HepG2 (cell line): ENCODE measurements at regions of chr3 and their contacts with region 1.

Region 1: GRCh38 chr3:142578327-142579223 is at the start of gene ATR:
- DNase-seq: peak; percentile 89
- ATAC-seq: peak; percentile 97
- H3K4me3 ChIP-seq: peak within 1 kb of the TSS; percentile 81 to 89 (median 84)
- H3K27ac ChIP-seq: peak within 1 kb of the TSS; percentile 90
- H3K4me1 ChIP-seq: peaks cover 30% of the 10 kb centered on the region
- H3K27me3 ChIP-seq: no peaks in the 10 kb centered on the region; a peak in 1 of 5 replicates
- CTCF ChIP-seq: peak; percentile 31
- EP300 ChIP-seq: peak in 1 of 2 experiments; percentile 59; a peak in 2 of 4 replicates
- POLR2A ChIP-seq: peak; percentile 88 to 89
- RAD21 ChIP-seq: no peak; the same call in none of the 2 replicates
- total RNA-seq, gene ATR: 17.0 and 21.7 TPM in 2 replicates

Region 2: DNA sequence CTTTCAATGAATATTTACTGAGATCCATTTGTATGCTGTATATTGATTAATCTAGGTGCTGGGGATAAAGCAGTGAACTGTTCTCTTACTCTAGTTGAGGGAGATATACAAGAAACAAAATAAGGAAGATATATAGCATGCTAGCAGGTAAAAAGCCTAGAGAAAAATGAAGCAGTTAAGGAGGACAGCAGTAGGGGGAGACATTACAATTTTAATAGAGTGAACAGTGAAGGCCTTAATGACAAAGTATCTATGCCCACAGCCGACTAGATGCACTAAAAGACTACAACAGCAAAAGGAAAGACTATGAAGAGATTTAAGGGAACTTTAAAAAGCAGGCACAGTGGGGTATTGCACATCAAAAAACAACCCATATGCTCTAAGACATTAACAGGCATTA is 212.1 kb before region 1 on chr3:
- CTCF ChIA-PET with region 1: no interaction called
- POLR2A ChIA-PET with region 1: no interaction called
- in situ Hi-C with region 1: no loop called
- intact Hi-C with region 1: no loop called
- DNase-seq: peak; percentile 2
- ATAC-seq: peak; percentile 71
- H3K4me3 ChIP-seq: no peak overlapping the region
- H3K27ac ChIP-seq: no peak overlapping the region
- H3K4me1 ChIP-seq: peaks cover 15% of the 10 kb centered on the region
- H3K27me3 ChIP-seq: no peaks in the 10 kb centered on the region
- CTCF ChIP-seq: peak; percentile 30
- EP300 ChIP-seq: no peak
- POLR2A ChIP-seq: no peak
- RAD21 ChIP-seq: no peak

Region 3: GRCh38 chr3:142447852-142448823 is 130.4 kb before region 1 on chr3 and contains the start of gene XRN1:
- CTCF ChIA-PET with region 1: no interaction called
- POLR2A ChIA-PET with region 1: interaction called, 5 read pairs
- in situ Hi-C with region 1: no loop called
- intact Hi-C with region 1: loop called (anchors 10 kb)
- DNase-seq: peak; percentile 86
- ATAC-seq: peak; percentile 99
- H3K4me3 ChIP-seq: peak within 1 kb of the TSS; percentile 97 to 100 (median 99)
- H3K27ac ChIP-seq: peak within 1 kb of the TSS; percentile 96
- H3K4me1 ChIP-seq: peaks cover 35% of the 10 kb centered on the region
- H3K27me3 ChIP-seq: peaks cover 0 to 4% of the 10 kb centered on the region in 2 experiments; a peak in 1 of 5 replicates
- CTCF ChIP-seq: no peak
- EP300 ChIP-seq: peak; percentile 25 to 56; a peak in 2 of 4 replicates
- POLR2A ChIP-seq: peak; percentile 87 to 94
- RAD21 ChIP-seq: peak; percentile 18; the same call in 1 of the 2 replicates
- total RNA-seq, gene XRN1: 13.2 and 18.1 TPM in 2 replicates

Region 4: DNA sequence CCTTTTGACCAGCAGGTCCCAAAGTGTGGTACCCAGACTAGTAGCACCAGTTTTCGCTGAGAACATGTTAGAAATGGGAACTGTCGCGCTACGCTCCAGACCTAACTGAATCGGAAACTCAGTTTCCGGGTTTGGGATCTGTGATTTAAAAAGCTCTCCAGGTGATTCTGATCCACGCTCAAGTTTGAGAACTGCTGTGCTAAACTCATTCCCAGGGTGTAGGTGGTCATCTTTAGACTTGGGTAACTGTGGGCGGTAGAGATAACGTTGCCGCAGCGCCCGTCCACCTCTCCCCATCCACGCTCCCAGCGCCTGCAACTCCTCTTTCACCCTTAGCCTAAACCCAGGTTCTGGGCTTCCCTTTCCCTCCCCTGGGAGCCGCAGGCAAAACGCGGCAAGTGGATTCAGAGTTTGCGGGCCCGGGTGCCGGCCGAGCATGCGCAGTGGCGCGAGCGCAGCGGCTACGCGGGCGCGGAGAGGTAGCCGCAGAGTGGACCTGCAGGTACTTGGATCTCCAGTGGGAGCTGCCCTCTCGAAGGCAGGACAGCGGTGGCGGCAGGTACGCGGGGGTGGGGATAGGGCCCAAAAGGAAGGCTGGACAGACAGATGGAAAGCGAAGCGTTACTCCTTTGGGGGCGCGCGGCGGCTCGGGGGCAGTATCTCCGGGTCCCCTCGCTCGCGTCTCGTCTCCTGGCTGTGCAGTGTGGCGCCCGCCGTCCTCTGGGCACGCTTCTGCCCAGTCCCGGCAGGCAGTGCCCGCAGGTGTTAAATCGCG is 17.6 kb after region 1 on chr3 and contains the start of gene PLS1:
- CTCF ChIA-PET with region 1: no interaction called
- POLR2A ChIA-PET with region 1: interaction called, 14 read pairs
- in situ Hi-C with region 1: no loop called
- intact Hi-C with region 1: loop called (anchors 1 kb)
- DNase-seq: peak; percentile 86
- ATAC-seq: peak; percentile 93
- H3K4me3 ChIP-seq: peak within 1 kb of the TSS; percentile 80 to 83 (median 80)
- H3K27ac ChIP-seq: peak within 1 kb of the TSS; percentile 82
- H3K4me1 ChIP-seq: peaks cover 29% of the 10 kb centered on the region
- H3K27me3 ChIP-seq: no peaks in the 10 kb centered on the region; a peak in 1 of 5 replicates
- CTCF ChIP-seq: peak; percentile 18; the same call in 1 of the 2 replicates
- EP300 ChIP-seq: peak; percentile 25 to 45; a peak in 1 of 4 replicates
- POLR2A ChIP-seq: peak; percentile 89 to 93
- RAD21 ChIP-seq: peak; percentile 41
- total RNA-seq, gene PLS1: 21.1 and 34.1 TPM in 2 replicates

Region 5: DNA sequence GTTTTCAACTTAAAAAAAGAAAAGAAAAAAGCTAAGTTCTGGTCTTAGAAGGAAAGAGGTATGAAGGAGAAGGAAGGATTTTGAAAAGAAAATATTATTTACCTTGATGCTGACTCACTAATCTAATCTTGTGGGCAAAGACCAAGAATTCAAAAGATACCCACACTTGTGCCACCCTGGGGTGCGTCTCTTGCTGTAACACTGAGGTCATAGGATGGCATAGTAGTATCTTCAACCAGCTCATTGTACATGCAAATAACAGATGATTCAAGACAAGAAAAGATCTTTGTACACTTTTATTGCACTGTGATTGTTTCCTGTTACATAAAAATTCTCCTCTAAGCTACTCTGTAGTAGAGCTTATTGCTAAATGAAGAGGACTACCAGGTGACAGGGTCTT is 34.9 kb after region 1 on chr3:
- CTCF ChIA-PET with region 1: no interaction called
- POLR2A ChIA-PET with region 1: no interaction called
- in situ Hi-C with region 1: no loop called
- intact Hi-C with region 1: no loop called
- DNase-seq: no peak
- ATAC-seq: no peak
- H3K4me3 ChIP-seq: no peak overlapping the region
- H3K27ac ChIP-seq: no peak overlapping the region
- H3K4me1 ChIP-seq: no peaks in the 10 kb centered on the region
- H3K27me3 ChIP-seq: no peaks in the 10 kb centered on the region
- CTCF ChIP-seq: no peak
- EP300 ChIP-seq: no peak
- POLR2A ChIP-seq: no peak
- RAD21 ChIP-seq: no peak

Region 6: GRCh38 chr3:142633073-142633472 is 54.5 kb after region 1 on chr3:
- CTCF ChIA-PET with region 1: no interaction called
- POLR2A ChIA-PET with region 1: no interaction called
- in situ Hi-C with region 1: no loop called
- intact Hi-C with region 1: no loop called
- DNase-seq: no peak
- ATAC-seq: no peak
- H3K4me3 ChIP-seq: no peak overlapping the region
- H3K27ac ChIP-seq: no peak overlapping the region
- H3K4me1 ChIP-seq: peaks cover 8% of the 10 kb centered on the region; the same call in 1 of the 2 replicates
- H3K27me3 ChIP-seq: no peaks in the 10 kb centered on the region
- CTCF ChIP-seq: no peak
- EP300 ChIP-seq: no peak
- POLR2A ChIP-seq: no peak
- RAD21 ChIP-seq: no peak

Region 7: GRCh38 chr3:142680710-142681109 is 102.1 kb after region 1 on chr3:
- CTCF ChIA-PET with region 1: no interaction called
- POLR2A ChIA-PET with region 1: no interaction called
- in situ Hi-C with region 1: no loop called
- intact Hi-C with region 1: no loop called
- DNase-seq: no peak
- ATAC-seq: peak; percentile 31; the same call in 1 of the 3 replicates
- H3K4me3 ChIP-seq: no peak overlapping the region
- H3K27ac ChIP-seq: no peak overlapping the region
- H3K4me1 ChIP-seq: no peaks in the 10 kb centered on the region
- H3K27me3 ChIP-seq: no peaks in the 10 kb centered on the region; a peak in 1 of 5 replicates
- CTCF ChIP-seq: peak; percentile 37
- EP300 ChIP-seq: no peak
- POLR2A ChIP-seq: no peak
- RAD21 ChIP-seq: no peak

Region 8: GRCh38 chr3:142993958-142994442 is 415.4 kb after region 1 on chr3:
- CTCF ChIA-PET with region 1: no interaction called
- POLR2A ChIA-PET with region 1: no interaction called
- in situ Hi-C with region 1: loop called (anchors 5 kb)
- intact Hi-C with region 1: no loop called
- DNase-seq: peak; percentile 66
- ATAC-seq: peak; percentile 66
- H3K4me3 ChIP-seq: no peak overlapping the region
- H3K27ac ChIP-seq: no peak overlapping the region
- H3K4me1 ChIP-seq: peaks cover 53% of the 10 kb centered on the region
- H3K27me3 ChIP-seq: peaks cover 0 to 1% of the 10 kb centered on the region in 2 experiments; a peak in 1 of 5 replicates
- CTCF ChIP-seq: peak; percentile 86
- EP300 ChIP-seq: no peak
- POLR2A ChIP-seq: no peak
- RAD21 ChIP-seq: peak; percentile 67; the same call in 1 of the 2 replicates

Region 9: DNA sequence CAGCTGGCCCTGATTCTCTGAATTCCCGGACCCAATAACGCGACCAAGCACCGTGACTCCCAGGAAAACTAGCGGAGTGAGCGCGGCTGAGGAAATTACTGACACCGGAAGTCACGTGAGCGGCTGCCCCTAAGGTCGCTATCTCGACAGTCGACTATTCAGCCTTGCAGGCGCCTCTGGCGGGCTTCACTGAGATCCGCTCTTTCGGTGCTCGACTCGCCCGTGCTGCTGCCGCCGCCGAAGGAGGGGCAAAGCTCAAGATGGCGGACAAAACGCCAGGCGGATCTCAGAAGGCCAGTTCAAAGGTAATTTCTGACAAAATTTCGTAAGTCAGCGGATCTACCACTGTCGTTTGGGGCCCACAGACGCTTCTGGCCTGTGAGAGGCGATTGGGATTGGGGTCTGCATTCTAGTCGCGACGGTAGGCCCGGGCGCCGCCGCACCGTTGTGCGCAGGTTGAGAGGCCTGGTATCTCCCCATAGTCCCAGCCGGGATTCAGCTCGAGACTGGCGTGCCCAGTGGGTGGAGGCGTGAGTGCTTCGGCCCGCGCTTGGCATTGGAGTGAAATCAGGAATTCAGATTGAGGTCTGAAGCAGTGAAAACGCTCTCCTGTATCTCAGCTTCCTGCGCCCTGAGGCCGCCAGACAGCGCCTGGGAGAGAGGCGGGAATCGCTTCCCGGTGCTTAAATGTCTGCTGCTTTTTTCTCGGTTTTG is 423.0 kb after region 1 on chr3 and contains the start of gene U2SURP:
- CTCF ChIA-PET with region 1: no interaction called
- POLR2A ChIA-PET with region 1: interaction called, 17 read pairs
- in situ Hi-C with region 1: no loop called
- intact Hi-C with region 1: no loop called
- DNase-seq: peak; percentile 96
- ATAC-seq: peak; percentile 85
- H3K4me3 ChIP-seq: peak within 1 kb of the TSS; percentile 87 to 92 (median 90)
- H3K27ac ChIP-seq: peak within 1 kb of the TSS; percentile 89
- H3K4me1 ChIP-seq: peaks cover 60% of the 10 kb centered on the region
- H3K27me3 ChIP-seq: no peaks in the 10 kb centered on the region; a peak in 1 of 5 replicates
- CTCF ChIP-seq: no peak
- EP300 ChIP-seq: peak; percentile 64 to 80; a peak in 3 of 4 replicates
- POLR2A ChIP-seq: peak; percentile 95
- RAD21 ChIP-seq: 0 out of 2 replicates have a peak, but pooled peaks have one; percentile 40
- total RNA-seq, gene U2SURP: 173 and 250 TPM in 2 replicates